H1 (cell line): ENCODE measurements at regions of chr17 and their contacts with region 1.

Region 1: GRCh38 chr17:82687375-82687861 is 11.1 kb downstream of the RAB40B start:
- DNase-seq: no peak
- H3K4me3 ChIP-seq: no peak overlapping the region
- H3K27ac ChIP-seq: no peak overlapping the region
- H3K4me1 ChIP-seq: no peaks in the 10 kb centered on the region; a peak in 1 of 7 replicates
- H3K27me3 ChIP-seq: no peaks in the 10 kb centered on the region; a peak in 1 of 7 replicates
- CTCF ChIP-seq: no peak
- EP300 ChIP-seq: no peak
- POLR2A ChIP-seq: no peak
- RAD21 ChIP-seq: no peak

Region 2: GRCh38 chr17:82160075-82160474 is 527.3 kb before region 1 on chr17:
- CTCF ChIA-PET with region 1: no interaction called
- POLR2A ChIA-PET with region 1: no interaction called
- DNase-seq: no peak
- H3K4me3 ChIP-seq: no peak overlapping the region
- H3K27ac ChIP-seq: no peak overlapping the region
- H3K4me1 ChIP-seq: no peaks in the 10 kb centered on the region
- H3K27me3 ChIP-seq: no peaks in the 10 kb centered on the region
- CTCF ChIP-seq: no peak
- EP300 ChIP-seq: no peak
- POLR2A ChIP-seq: no peak
- RAD21 ChIP-seq: no peak

Region 3: DNA sequence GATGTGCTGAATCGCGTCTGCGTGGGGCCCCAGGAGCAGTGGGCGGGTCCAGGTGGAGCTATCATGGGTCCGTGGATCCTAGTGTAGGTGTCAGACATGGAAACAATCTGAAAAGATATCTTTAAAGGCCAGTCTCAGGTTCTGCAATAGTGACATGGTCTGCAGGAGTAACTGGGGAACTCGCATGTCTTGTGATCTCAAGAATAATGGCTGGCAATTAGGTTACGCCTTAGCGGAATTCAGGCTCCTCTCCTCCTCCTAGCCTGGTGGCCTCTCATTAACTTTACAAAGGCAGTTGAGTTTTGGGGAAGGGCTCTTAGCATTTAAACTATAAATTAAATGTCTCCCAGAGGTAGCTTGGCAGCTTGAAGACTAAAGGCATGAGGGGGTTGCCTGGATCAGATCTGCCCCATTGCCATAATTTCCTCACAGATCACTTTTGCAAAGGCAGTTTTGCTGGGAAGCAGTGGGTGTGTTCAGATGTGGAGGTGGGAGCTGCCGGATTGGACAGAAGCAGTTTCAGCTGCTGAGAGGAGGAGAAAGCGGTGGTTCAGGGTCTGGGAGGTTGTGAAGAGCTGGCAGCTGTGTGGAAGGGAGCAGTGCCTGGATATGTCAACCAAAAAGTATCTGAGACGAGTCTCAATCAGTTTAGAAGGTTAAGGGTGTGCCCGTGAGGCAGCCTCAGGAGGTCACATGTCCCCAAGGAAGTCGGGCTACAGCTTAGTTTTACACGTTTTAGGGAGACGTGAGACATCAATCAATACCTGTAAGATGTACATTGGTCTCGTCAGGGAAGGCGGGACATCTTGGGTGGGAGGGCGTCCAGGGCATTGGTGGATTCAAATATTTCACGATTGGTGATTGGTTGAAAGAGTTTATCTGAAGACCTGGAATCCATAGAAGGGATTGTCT is 67.1 kb after region 1 on chr17:
- CTCF ChIA-PET with region 1: interaction called, 10 read pairs
- POLR2A ChIA-PET with region 1: interaction called, 3 read pairs
- DNase-seq: peak; percentile 61 to 68
- H3K4me3 ChIP-seq: peak overlapping the region; percentile 13 to 51 (median 24); a peak in 7 of 8 replicates
- H3K27ac ChIP-seq: peak overlapping the region; percentile 76
- H3K4me1 ChIP-seq: peaks cover 8 to 23% (median 16%) of the 10 kb centered on the region in 4 experiments
- H3K27me3 ChIP-seq: peaks cover 0 to 6% (median 3%) of the 10 kb centered on the region in 4 experiments; a peak in 3 of 7 replicates
- CTCF ChIP-seq: no peak
- EP300 ChIP-seq: no peak
- POLR2A ChIP-seq: no peak; a peak in 1 of 3 replicates
- RAD21 ChIP-seq: no peak